Activated CD4-positive, alpha-beta T cell treated with anti-CD3 and anti-CD28 coated beads for 36 hours (primary cell): ENCODE measurements at regions of chr19 and their contacts with region 1.

Region 1: DNA sequence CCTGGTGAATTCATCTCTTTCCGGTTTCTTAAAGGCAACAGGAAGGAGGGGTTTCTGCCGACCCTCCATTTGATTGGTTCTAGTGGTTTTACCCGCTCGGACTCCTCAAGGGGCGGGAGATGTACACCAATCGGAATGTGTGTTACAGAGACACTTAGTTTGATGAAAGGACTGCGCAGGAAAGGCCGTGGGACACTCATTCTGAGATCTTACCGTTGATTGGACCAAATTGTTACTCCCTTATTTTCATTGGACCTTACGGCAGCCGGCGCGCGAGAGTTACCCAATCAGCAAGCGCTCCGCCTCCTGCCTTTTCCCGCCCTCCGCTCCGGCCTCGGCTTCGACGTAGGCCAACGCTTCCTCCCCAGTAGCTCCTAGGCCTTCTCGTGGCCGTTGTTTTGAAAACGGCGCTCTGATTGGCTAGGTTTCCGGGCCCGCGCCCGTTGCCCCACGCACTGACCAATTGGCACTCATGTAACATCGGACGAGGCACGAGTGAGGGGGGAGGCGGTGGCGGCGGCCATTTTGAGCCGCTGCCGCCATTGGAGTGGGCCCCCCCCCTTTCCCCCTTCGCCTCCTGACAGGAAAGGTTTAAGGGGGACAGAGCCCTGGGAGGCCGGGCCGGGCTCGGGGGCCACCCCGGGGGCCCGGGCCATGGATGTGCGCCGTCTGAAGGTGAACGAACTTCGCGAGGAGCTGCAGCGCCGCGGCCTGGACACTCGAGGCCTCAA is at the start of gene HNRNPUL1:
- DNase-seq: peak; percentile 99
- ATAC-seq: peak; percentile 70
- H3K4me3 Mint-ChIP-seq: peak within 1 kb of the TSS; percentile 95
- H3K27ac Mint-ChIP-seq: peak within 1 kb of the TSS; percentile 100
- H3K4me1 Mint-ChIP-seq: peaks cover 34% of the 10 kb centered on the region
- H3K27me3 Mint-ChIP-seq: no peaks in the 10 kb centered on the region
- total RNA-seq, gene HNRNPUL1: 263 to 312 TPM

Region 2: DNA sequence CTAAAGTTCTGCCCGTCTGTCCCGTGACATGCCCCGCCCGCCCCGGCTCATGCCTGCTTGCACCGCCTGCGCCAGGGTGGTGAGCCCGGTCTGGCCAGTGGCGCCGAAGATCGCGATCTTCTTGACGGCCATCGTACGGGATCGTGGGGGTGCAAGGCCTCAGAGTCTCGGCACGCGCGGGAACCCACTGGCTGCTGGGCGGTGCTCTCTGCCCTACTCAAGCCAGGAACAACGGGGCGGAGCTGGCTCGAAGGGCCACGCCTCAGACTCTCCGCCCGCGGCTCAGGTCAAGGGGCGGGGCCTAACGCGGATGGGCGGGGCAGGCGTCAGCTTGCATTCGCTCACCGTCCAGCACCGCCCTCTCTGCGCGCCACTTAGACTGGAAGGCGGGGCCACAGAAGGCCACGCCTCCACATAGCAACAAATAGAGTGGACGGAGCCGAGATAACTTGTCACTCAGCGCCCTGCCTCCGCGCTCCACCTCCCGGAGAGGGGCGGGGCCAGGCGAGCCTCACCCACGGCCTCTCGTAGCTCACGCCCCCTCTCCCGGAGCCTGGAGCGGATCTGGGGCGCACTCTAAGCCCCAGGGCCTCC is 798.4 kb before region 1 on chr19 and contains the start of gene BLVRB:
- CTCF ChIA-PET with region 1: no interaction called
- POLR2A ChIA-PET with region 1: no interaction called
- intact Hi-C with region 1: loop called in 1 of 2 experiments (anchors 2 kb)
- DNase-seq: peak; percentile 100
- ATAC-seq: peak; percentile 84
- H3K4me3 Mint-ChIP-seq: peak within 1 kb of the TSS; percentile 77
- H3K27ac Mint-ChIP-seq: peak within 1 kb of the TSS; percentile 87
- H3K4me1 Mint-ChIP-seq: peaks cover 30% of the 10 kb centered on the region
- H3K27me3 Mint-ChIP-seq: peaks cover 11% of the 10 kb centered on the region
- total RNA-seq, gene BLVRB: 34.1 to 35.6 TPM

Region 3: DNA sequence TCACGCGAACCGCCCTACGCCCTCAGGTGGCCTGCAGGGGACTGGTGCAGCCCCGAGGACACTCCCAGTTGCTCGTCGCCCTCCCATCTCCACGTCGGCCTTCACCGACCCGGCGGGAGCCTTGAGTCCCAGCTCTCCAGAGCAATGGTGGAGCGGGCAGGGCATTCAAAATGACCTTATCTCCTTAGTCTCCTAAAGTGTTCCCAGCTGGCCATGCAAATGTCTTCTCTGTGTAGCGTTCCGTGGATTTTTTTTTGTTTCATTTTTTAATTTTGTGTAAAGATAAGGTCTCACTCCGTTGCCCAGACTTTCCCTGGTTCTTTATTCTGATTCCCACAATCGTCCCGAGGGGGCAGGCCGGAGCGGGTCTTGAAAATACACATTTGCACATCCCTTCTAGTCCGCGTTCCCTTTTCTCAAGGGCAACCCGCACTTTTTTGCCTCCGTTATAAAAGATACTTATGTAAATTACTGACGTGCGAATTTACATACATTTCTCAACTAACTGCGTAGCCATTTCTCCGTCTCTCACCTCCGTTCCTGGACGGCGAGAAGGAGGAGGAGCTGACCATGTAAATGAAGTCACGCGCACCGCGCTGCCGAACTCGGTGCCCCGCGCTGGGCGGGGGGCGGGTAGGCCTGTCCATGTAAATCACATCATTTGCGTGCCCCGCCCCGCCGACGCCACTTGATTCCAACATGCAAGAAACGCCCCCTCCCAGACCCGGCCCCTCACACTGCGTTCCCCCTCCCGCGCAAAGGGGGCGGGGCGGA is 465.6 kb before region 1 on chr19:
- CTCF ChIA-PET with region 1: no interaction called
- POLR2A ChIA-PET with region 1: no interaction called
- intact Hi-C with region 1: loop called in 1 of 2 experiments (anchors 1 kb)
- DNase-seq: peak; percentile 100
- ATAC-seq: peak; percentile 82
- H3K4me3 Mint-ChIP-seq: peak overlapping the region; percentile 91
- H3K27ac Mint-ChIP-seq: peak overlapping the region; percentile 97
- H3K4me1 Mint-ChIP-seq: peaks cover 49% of the 10 kb centered on the region
- H3K27me3 Mint-ChIP-seq: no peaks in the 10 kb centered on the region

Region 4: GRCh38 chr19:41298348-41298964 is 34.4 kb after region 1 on chr19:
- CTCF ChIA-PET with region 1: interaction called, 6 read pairs
- POLR2A ChIA-PET with region 1: interaction called, 13 read pairs
- intact Hi-C with region 1: no loop called
- DNase-seq: no peak
- ATAC-seq: no peak
- H3K4me3 Mint-ChIP-seq: no peak overlapping the region
- H3K27ac Mint-ChIP-seq: peak overlapping the region; percentile 68
- H3K4me1 Mint-ChIP-seq: peaks cover 91% of the 10 kb centered on the region
- H3K27me3 Mint-ChIP-seq: no peaks in the 10 kb centered on the region

Region 5: GRCh38 chr19:41397086-41398049 is 133.4 kb after region 1 on chr19 and contains the starts of genes BCKDHA and EXOSC5:
- CTCF ChIA-PET with region 1: no interaction called
- POLR2A ChIA-PET with region 1: no interaction called
- intact Hi-C with region 1: loop called (anchors 1 kb)
- DNase-seq: peak; percentile 99
- ATAC-seq: peak; percentile 100
- H3K4me3 Mint-ChIP-seq: peak within 1 kb of the TSS; percentile 97
- H3K27ac Mint-ChIP-seq: peak within 1 kb of the TSS; percentile 97
- H3K4me1 Mint-ChIP-seq: peaks cover 31% of the 10 kb centered on the region
- H3K27me3 Mint-ChIP-seq: no peaks in the 10 kb centered on the region
- total RNA-seq, gene BCKDHA: 14.5 to 25.4 TPM
- total RNA-seq, gene EXOSC5: 32.7 to 47.8 TPM

Region 6: GRCh38 chr19:41859618-41860418 is 595.8 kb after region 1 on chr19 and contains the start of gene RPS19:
- CTCF ChIA-PET with region 1: no interaction called
- POLR2A ChIA-PET with region 1: no interaction called
- intact Hi-C with region 1: loop called in 1 of 2 experiments (anchors 1 kb)
- DNase-seq: peak; percentile 99
- ATAC-seq: peak; percentile 89
- H3K4me3 Mint-ChIP-seq: peak within 1 kb of the TSS; percentile 86
- H3K27ac Mint-ChIP-seq: peak within 1 kb of the TSS; percentile 98
- H3K4me1 Mint-ChIP-seq: peaks cover 46% of the 10 kb centered on the region
- H3K27me3 Mint-ChIP-seq: no peaks in the 10 kb centered on the region
- total RNA-seq, gene RPS19: 2,342 to 3,204 TPM